ENCODE measurements at regions of chr6 and their contacts with region 1.

Region 1: DNA sequence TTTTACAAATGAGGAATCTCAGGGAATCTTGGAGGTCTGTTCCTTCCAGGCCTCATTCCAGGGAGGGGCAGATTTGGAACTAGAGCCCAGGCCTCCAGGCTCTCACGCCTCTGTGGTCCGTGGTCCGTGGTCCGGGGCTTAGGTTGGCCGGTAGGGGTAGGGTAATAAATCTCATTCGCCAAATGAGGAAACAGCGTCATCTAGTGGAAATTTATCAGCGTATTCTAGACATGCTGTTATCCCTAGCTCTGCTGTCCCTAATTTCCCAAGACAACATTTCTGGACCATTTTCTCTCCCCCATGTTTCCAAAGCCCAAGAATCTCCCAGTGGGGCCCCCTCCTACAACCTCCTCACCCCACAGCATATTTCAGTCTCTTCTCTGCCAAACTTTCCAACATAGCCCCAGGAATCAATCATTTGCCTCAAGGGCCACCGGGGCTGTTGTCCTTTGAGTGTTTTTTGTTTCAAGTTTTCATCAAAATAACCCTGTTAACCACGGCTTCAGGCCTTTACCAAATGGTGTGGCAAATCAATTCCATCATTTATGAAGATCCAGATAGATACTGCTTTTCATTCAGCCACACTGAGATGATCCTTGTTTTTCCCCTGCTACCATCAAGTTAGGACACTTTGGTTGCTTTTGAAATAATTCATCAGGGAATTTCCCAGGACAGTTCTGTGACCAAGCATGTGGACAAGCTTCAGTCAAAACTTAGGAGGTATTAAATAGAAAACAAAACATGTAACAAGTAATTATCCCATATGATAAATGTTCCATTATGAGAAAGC is 126.8 kb downstream of the ALDH8A1 start:
- DNase-seq: peak; percentile 84
- H3K4me3 ChIP-seq: no peak overlapping the region
- H3K27ac ChIP-seq: no peak overlapping the region
- H3K4me1 ChIP-seq: no peaks in the 10 kb centered on the region
- H3K27me3 ChIP-seq: no peaks in the 10 kb centered on the region
- CTCF ChIP-seq: peak; percentile 85 to 88
- POLR2A ChIP-seq: no peak

Region 2: DNA sequence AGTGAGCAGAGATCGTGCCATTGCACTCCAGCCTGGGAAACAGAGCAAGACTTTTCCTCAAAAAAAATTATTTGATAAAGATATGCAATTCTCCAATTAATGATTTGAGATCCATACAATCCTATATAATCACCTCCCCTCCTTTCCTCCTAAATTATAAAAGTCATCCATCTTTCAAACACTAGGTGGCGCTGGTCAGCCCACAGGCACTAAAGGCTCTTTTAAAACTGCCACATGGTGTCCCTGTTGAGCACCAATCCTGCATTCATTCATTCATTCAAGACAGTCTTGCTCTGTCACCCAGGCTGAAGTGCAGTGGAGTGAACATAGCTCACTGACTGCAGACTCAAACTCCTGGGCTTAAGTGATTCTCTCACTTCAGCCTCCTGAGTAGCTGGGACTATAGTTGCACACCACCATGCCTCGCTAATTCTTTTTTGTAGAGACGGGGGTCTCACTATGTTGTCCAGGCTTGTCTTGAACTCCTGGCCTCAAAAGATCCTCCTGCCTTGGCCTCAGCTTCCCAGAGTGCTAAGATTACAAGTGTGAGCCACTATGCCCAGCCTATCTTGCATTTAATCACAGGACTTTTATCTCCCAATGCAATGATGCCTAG is 711.9 kb before region 1 on chr6:
- CTCF ChIA-PET with region 1: interaction called, 8 read pairs
- POLR2A ChIA-PET with region 1: no interaction called
- dilution Hi-C with region 1: no loop called
- intact Hi-C with region 1: loop called (anchors 1 kb)
- DNase-seq: peak; percentile 59
- H3K4me3 ChIP-seq: no peak overlapping the region
- H3K27ac ChIP-seq: no peak overlapping the region
- H3K4me1 ChIP-seq: no peaks in the 10 kb centered on the region
- H3K27me3 ChIP-seq: peaks cover 3 to 6% of the 10 kb centered on the region in 2 experiments
- CTCF ChIP-seq: peak; percentile 81 to 85
- POLR2A ChIP-seq: no peak

Region 3: GRCh38 chr6:134152767-134153485 is 670.2 kb before region 1 on chr6:
- CTCF ChIA-PET with region 1: interaction called, 72 read pairs
- POLR2A ChIA-PET with region 1: no interaction called
- dilution Hi-C with region 1: no loop called
- intact Hi-C with region 1: loop called (anchors 1 kb)
- DNase-seq: no peak
- H3K4me3 ChIP-seq: no peak overlapping the region
- H3K27ac ChIP-seq: no peak overlapping the region
- H3K4me1 ChIP-seq: no peaks in the 10 kb centered on the region
- H3K27me3 ChIP-seq: no peaks in the 10 kb centered on the region
- CTCF ChIP-seq: no peak
- POLR2A ChIP-seq: no peak

Region 4: DNA sequence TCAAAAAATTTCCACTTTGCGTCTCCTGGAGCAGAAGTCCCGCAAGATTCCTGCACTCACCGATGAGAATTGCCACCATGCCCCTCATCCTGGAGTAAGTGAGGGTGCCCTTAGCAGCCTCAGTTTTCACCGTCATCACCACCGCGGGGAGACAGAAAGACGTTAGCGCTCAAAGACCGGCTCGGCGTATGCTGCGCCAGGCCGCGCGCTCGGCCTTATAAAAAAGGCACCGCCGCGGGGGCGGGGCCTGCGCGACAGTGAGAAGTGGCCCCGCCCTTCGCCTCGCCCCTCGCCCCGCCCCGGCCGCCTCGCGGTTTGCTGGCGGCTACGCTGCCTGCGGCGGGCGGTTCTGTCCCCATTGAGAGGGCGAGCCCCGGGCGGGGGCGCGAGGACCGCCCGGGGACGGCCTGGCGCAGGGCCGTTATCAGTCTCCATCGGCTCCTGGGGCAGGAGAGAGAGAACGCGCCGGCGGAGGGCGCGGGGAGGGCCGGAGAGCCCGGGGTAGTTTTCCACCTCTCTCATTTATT is 648.4 kb before region 1 on chr6:
- CTCF ChIA-PET with region 1: interaction called, 46 read pairs
- POLR2A ChIA-PET with region 1: interaction called, 5 read pairs
- dilution Hi-C with region 1: no loop called
- intact Hi-C with region 1: loop called (anchors 1 kb)
- DNase-seq: peak; percentile 90
- H3K4me3 ChIP-seq: peak overlapping the region; percentile 85 to 100 (median 98)
- H3K27ac ChIP-seq: peak overlapping the region; percentile 98
- H3K4me1 ChIP-seq: peaks cover 59% of the 10 kb centered on the region
- H3K27me3 ChIP-seq: no peaks in the 10 kb centered on the region
- CTCF ChIP-seq: no peak
- POLR2A ChIP-seq: peak; percentile 100

Region 5: GRCh38 chr6:134363318-134364039 is 459.6 kb before region 1 on chr6:
- CTCF ChIA-PET with region 1: no interaction called
- POLR2A ChIA-PET with region 1: no interaction called
- dilution Hi-C with region 1: no loop called
- intact Hi-C with region 1: no loop called
- DNase-seq: peak; percentile 17
- H3K4me3 ChIP-seq: no peak overlapping the region
- H3K27ac ChIP-seq: no peak overlapping the region
- H3K4me1 ChIP-seq: no peaks in the 10 kb centered on the region
- H3K27me3 ChIP-seq: no peaks in the 10 kb centered on the region
- CTCF ChIP-seq: no peak
- POLR2A ChIP-seq: no peak

Region 6: GRCh38 chr6:134457941-134458340 is 365.2 kb before region 1 on chr6:
- CTCF ChIA-PET with region 1: no interaction called
- POLR2A ChIA-PET with region 1: no interaction called
- dilution Hi-C with region 1: no loop called
- intact Hi-C with region 1: loop called (anchors 1 kb)
- DNase-seq: no peak
- H3K4me3 ChIP-seq: no peak overlapping the region
- H3K27ac ChIP-seq: no peak overlapping the region
- H3K4me1 ChIP-seq: no peaks in the 10 kb centered on the region
- H3K27me3 ChIP-seq: no peaks in the 10 kb centered on the region
- CTCF ChIP-seq: no peak
- POLR2A ChIP-seq: no peak

Region 7: DNA sequence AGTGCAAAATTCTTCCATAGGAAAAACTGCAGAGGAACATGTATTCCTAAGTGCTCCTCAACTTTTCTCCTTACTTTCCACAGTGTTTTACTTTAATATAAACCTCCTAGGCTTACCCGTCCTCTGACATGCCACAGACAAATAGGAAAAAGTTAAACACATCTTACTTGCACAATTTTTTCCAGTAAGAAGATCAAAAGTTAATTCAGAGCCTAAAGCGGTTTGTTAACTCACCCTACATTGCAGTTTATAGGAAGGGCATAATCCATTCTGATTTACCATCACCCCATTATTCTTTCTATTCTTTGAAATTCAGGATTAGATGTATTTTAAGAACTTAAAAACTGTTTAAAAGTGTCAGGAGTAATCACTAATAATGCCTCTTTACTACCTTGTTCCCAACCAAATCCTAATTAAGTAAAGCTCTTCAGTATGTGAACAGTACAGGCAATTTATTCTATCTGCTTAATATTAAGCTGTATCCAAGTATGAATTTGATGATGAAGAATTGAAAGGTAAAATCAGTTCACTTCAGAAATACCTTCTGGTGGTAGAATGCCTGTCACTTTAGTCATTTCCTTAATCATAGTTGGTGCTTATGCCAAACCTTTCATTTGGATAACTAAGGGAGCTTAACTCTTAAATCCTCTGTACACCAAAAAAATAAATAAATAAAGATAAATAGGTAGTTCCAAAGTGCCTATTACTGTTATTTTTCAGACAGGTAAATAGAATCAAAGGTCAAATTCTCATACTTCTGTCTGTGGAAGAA is 165.2 kb before region 1 on chr6:
- CTCF ChIA-PET with region 1: interaction called, 5 read pairs
- POLR2A ChIA-PET with region 1: no interaction called
- dilution Hi-C with region 1: no loop called
- intact Hi-C with region 1: loop called (anchors 5 kb)
- DNase-seq: peak; percentile 10
- H3K4me3 ChIP-seq: no peak overlapping the region
- H3K27ac ChIP-seq: no peak overlapping the region
- H3K4me1 ChIP-seq: peaks cover 4% of the 10 kb centered on the region
- H3K27me3 ChIP-seq: no peaks in the 10 kb centered on the region
- CTCF ChIP-seq: no peak
- POLR2A ChIP-seq: no peak

Region 8: DNA sequence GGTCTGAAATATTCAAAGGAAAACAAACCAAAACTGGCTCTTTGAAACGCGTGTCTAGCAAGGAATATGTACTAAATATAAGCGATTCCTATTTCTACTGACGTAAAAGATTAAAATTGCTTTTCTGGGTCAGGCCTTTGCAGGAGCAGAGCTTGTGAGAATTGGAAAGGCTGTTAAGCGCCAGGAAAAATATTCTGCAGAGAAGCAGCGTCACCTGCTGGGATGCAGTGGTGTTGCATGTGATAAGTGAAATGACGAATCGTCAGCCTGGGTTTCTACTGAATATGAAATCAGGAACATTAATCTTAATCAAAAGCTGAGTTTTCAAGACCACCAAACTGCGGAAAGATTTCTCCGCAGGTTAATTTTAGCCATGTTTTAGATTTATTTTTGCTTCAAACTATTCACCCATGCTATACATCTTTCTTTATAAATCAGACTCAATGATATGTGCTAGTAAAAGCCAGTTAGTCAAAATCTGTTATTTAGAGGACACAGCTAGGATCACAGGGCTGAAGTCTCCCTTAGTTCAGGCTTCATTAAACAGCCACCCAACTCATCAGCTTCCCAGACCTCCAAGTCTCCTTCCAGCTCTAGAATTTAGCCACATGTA is 59.4 kb after region 1 on chr6:
- CTCF ChIA-PET with region 1: interaction called, 28 read pairs
- POLR2A ChIA-PET with region 1: interaction called, 3 read pairs
- dilution Hi-C with region 1: no loop called
- intact Hi-C with region 1: loop called (anchors 2 kb)
- DNase-seq: peak; percentile 79
- H3K4me3 ChIP-seq: no peak overlapping the region
- H3K27ac ChIP-seq: peak overlapping the region; percentile 3
- H3K4me1 ChIP-seq: peaks cover 13% of the 10 kb centered on the region
- H3K27me3 ChIP-seq: no peaks in the 10 kb centered on the region
- CTCF ChIP-seq: peak; percentile 82
- POLR2A ChIP-seq: no peak

Region 9: GRCh38 chr6:134979142-134979541 is 156.0 kb after region 1 on chr6:
- CTCF ChIA-PET with region 1: no interaction called
- POLR2A ChIA-PET with region 1: no interaction called
- dilution Hi-C with region 1: no loop called
- intact Hi-C with region 1: no loop called
- DNase-seq: no peak
- H3K4me3 ChIP-seq: no peak overlapping the region
- H3K27ac ChIP-seq: no peak overlapping the region
- H3K4me1 ChIP-seq: peaks cover 5% of the 10 kb centered on the region
- H3K27me3 ChIP-seq: no peaks in the 10 kb centered on the region
- CTCF ChIP-seq: no peak
- POLR2A ChIP-seq: no peak